Thyroid gland (tissue), 4 donors: ENCODE measurements at regions of chr1 and their contacts with region 1.

Region 1: GRCh38 chr1:184075055-184076029 is 23.8 kb downstream of the TSEN15 start:
- DNase-seq: peak; percentile 15 to 17
- H3K4me3 ChIP-seq: no peak overlapping the region
- H3K27ac ChIP-seq: peak overlapping the region in 1 of 3 donors; percentile 7
- H3K4me1 ChIP-seq: no peaks in the 10 kb centered on the region
- H3K27me3 ChIP-seq: no peaks in the 10 kb centered on the region
- CTCF ChIP-seq: peak; percentile 36 to 90 (median 67)
- POLR2A ChIP-seq: no peak

Region 2: GRCh38 chr1:184664042-184664655 is 588.8 kb after region 1 on chr1:
- intact Hi-C with region 1: loop called (anchors 10 kb)
- DNase-seq: peak; percentile 73 to 76
- H3K4me3 ChIP-seq: peak overlapping the region in 1 of 3 donors; percentile 6
- H3K27ac ChIP-seq: no peak overlapping the region
- H3K4me1 ChIP-seq: peaks cover 0 to 10% of the 10 kb centered on the region in 2 donors
- H3K27me3 ChIP-seq: no peaks in the 10 kb centered on the region
- CTCF ChIP-seq: peak; percentile 75 to 94 (median 84)
- POLR2A ChIP-seq: no peak